ENCODE measurements at regions of chr9 and their contacts with region 1.

Region 1: DNA sequence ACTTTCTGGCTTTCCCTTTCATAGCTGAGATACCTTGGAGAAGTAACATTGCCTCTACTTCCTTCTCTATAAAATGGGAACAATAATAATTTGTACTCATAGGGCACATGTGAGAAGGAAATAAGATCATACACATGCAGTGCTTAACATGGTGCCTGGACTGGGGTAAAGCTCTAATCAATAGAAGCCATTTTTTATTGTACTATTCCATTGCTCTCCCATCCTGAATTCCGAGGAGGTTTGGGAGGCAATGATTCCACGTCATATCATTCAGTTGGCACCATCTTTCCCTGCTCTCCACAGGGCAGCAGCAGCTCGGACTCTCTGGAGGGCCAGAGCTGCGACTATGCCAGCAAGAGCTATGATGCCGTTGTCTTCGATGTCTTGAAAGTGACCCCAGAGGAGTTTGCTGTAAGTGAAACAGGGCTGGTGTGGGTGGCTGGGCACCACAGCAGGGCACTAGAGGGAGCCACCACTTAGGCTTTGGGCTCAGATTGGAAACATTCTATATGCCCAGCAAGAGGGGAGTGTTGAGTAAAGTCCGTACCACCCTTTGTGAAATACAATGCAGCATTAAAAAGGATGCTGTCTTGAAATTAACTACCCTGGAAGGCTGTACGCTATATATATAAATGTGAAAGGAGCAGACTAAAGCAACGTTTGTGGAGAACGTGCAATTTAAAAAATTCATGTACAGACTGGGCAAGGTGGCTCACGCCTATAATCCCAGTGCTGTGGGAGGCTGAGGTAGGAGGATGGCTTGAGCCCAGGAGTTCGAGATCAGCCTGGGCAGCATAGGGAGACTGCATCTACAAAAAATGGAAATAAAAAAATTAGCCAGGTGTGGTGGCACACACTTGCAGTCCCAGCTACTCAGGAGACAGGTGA is 51.2 kb downstream of the RALGPS1 start:
- DNase-seq: peak in 1 of 2 experiments; percentile 65
- H3K4me3 ChIP-seq: no peak overlapping the region
- H3K4me3 Mint-ChIP-seq: no peak overlapping the region
- H3K27ac Mint-ChIP-seq: no peak overlapping the region
- H3K4me1 ChIP-seq: no peaks in the 10 kb centered on the region; the same call in 1 of the 2 replicates
- H3K4me1 Mint-ChIP-seq: peaks cover 10% of the 10 kb centered on the region
- H3K27me3 ChIP-seq: no peaks in the 10 kb centered on the region
- H3K27me3 Mint-ChIP-seq: no peaks in the 10 kb centered on the region
- CTCF ChIP-seq: peak; percentile 67 to 79

Region 2: DNA sequence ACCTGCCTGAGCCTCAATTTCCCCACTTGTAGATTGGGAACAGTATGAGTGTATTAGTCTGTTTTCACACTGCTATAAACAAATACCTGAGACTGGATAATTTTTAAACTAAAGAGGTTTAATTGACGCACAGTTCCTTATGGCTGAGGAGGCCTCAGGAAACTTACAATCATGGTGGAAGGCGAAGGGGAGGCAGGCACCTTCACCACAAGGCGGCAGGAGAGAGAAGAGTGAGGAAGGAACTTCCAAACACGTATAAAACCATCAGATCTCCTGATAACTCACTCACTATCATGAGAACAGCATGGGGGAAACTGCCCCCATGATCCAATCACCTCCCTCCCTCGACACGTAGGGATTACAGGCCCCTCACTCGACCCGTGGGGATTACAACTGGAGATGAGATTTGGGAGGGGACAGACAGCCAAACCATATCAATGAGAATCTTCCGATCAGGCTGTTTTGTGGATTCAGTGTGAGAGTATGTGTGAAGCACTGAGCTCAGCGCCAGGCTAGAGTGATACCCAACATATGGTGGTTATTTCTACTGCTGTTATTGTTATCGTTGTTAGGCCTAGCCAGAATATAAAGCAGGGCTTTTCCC is 366.6 kb before region 1 on chr9:
- CTCF ChIA-PET with region 1: no interaction called
- POLR2A ChIA-PET with region 1: no interaction called
- intact Hi-C with region 1: no loop called
- DNase-seq: no peak
- H3K4me3 ChIP-seq: no peak overlapping the region
- H3K4me3 Mint-ChIP-seq: no peak overlapping the region
- H3K27ac Mint-ChIP-seq: no peak overlapping the region
- H3K4me1 ChIP-seq: no peaks in the 10 kb centered on the region
- H3K4me1 Mint-ChIP-seq: no peaks in the 10 kb centered on the region
- H3K27me3 ChIP-seq: no peaks in the 10 kb centered on the region
- H3K27me3 Mint-ChIP-seq: no peaks in the 10 kb centered on the region
- CTCF ChIP-seq: peak; percentile 10 to 27

Region 3: GRCh38 chr9:126947529-126947928 is 18.3 kb before region 1 on chr9:
- CTCF ChIA-PET with region 1: no interaction called
- POLR2A ChIA-PET with region 1: no interaction called
- intact Hi-C with region 1: loop called (anchors 2 kb)
- DNase-seq: peak; percentile 59 to 61
- H3K4me3 ChIP-seq: no peak overlapping the region
- H3K4me3 Mint-ChIP-seq: no peak overlapping the region
- H3K27ac Mint-ChIP-seq: no peak overlapping the region
- H3K4me1 ChIP-seq: 0 out of 2 replicates have a peak, but pooled peaks cover 8% of the 10 kb centered on the region
- H3K4me1 Mint-ChIP-seq: peaks cover 10% of the 10 kb centered on the region
- H3K27me3 ChIP-seq: no peaks in the 10 kb centered on the region
- H3K27me3 Mint-ChIP-seq: no peaks in the 10 kb centered on the region
- CTCF ChIP-seq: peak in 1 of 2 experiments; percentile 39

Region 4: DNA sequence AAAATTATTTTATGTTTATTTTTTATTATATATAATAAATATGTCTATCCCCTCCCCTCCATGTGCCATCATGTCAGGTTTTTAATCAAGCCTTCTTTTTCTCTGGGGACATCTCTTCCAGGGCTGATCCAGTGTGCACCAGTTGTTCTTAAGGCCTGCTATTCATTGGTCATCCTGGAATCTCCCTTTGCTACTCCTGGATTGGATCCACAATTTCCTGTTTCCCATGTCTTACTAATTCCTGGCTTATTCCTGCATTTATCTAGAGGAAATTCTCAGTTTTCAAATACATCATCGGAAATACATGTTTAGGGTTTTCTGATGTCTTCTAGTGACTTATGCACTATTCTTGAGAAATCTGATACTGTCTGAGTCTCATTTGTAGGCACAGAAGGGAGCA is 99.8 kb after region 1 on chr9:
- CTCF ChIA-PET with region 1: interaction called, 4 read pairs
- POLR2A ChIA-PET with region 1: no interaction called
- intact Hi-C with region 1: loop called (anchors 5 kb)
- DNase-seq: no peak
- H3K4me3 ChIP-seq: no peak overlapping the region
- H3K4me3 Mint-ChIP-seq: no peak overlapping the region
- H3K27ac Mint-ChIP-seq: peak overlapping the region; percentile 95
- H3K4me1 ChIP-seq: peaks cover 65% of the 10 kb centered on the region
- H3K4me1 Mint-ChIP-seq: peaks cover 32% of the 10 kb centered on the region
- H3K27me3 ChIP-seq: no peaks in the 10 kb centered on the region
- H3K27me3 Mint-ChIP-seq: no peaks in the 10 kb centered on the region
- CTCF ChIP-seq: no peak

Region 5: GRCh38 chr9:127199001-127199791 is 233.4 kb after region 1 on chr9:
- CTCF ChIA-PET with region 1: interaction called, 3 read pairs
- POLR2A ChIA-PET with region 1: no interaction called
- intact Hi-C with region 1: loop called (anchors 1 kb)
- DNase-seq: peak; percentile 78 to 84
- H3K4me3 ChIP-seq: no peak overlapping the region
- H3K4me3 Mint-ChIP-seq: no peak overlapping the region
- H3K27ac Mint-ChIP-seq: peak overlapping the region; percentile 61
- H3K4me1 ChIP-seq: peaks cover 6% of the 10 kb centered on the region; the same call in 1 of the 2 replicates
- H3K4me1 Mint-ChIP-seq: peaks cover 10% of the 10 kb centered on the region
- H3K27me3 ChIP-seq: no peaks in the 10 kb centered on the region
- H3K27me3 Mint-ChIP-seq: no peaks in the 10 kb centered on the region
- CTCF ChIP-seq: peak; percentile 78 to 93